ENCODE measurements at regions of chr2 and their contacts with region 1.

Region 1: DNA sequence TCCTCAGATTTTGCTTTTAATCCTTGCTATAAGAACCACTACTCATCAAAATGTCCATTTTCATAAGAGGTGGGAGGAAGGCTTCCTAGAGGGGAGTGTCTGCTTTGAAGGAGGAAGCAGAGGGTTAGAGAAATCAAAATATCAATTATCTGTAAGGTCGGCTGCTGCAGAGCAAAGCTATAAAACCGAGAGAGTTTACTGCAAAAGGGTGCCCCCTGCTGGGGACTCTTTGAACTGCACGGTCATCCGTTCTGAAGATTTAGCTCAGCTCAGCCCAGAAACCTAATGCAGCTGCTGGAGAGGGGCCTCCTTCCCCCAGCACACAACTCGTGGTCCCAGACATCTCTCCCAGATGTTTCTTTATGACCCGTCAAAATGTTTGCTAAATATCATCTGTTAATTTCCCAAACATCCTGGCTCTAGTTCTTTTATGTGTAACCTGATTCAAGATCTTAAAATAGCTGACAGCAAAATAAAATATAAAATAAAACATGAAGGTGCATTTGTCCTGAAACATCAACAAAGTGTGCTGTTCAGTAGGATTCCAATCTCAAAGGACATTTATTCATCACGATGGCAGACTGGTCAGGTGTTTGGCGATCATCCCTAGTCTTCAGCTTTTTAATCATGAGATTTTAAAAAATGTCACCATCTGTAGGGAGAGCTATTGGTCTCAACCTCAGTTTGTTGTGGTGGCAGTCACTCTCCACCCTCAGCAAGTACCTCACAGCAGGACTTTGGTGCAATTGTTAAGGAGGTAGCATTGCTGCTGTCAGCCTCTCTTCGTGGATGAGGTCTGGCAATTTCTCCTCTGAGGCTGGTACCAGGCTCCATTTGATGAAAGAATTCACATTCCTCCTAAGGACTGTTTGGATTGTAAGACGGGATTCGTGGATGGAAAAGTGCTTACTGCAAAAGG is 185.9 kb downstream of the MTX2 start:
- DNase-seq: peak; percentile 94
- ATAC-seq: peak; percentile 83
- H3K4me3 Mint-ChIP-seq: no peak overlapping the region
- H3K27ac Mint-ChIP-seq: no peak overlapping the region
- H3K4me1 Mint-ChIP-seq: peaks cover 2% of the 10 kb centered on the region
- H3K27me3 Mint-ChIP-seq: peaks cover 25% of the 10 kb centered on the region
- CTCF ChIP-seq: peak; percentile 85

Region 2: DNA sequence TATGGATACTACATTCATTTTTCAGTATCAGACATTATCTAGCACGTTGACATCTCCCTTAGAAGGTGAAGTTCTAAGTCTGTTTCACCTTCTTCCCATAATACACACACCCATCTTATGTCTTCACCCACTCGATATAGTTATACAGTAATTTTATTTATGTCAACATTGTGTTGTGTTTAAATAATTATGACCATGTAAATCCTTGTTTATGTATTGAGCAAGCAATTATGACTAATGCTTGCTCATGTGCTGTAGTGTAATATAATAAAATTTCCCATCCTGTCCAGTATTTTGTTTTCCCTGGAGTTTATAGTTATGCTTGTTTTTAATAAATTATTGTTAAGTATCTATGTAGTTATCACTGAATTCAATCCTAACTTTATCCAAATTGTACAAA is 22.7 kb before region 1 on chr2:
- CTCF ChIA-PET with region 1: interaction called, 14 read pairs
- POLR2A ChIA-PET with region 1: no interaction called
- intact Hi-C with region 1: no loop called
- DNase-seq: no peak
- ATAC-seq: no peak
- H3K4me3 Mint-ChIP-seq: no peak overlapping the region
- H3K27ac Mint-ChIP-seq: no peak overlapping the region
- H3K4me1 Mint-ChIP-seq: no peaks in the 10 kb centered on the region
- H3K27me3 Mint-ChIP-seq: peaks cover 18% of the 10 kb centered on the region
- CTCF ChIP-seq: no peak

Region 3: GRCh38 chr2:176638167-176639015 is 183.2 kb after region 1 on chr2:
- CTCF ChIA-PET with region 1: interaction called, 20 read pairs
- POLR2A ChIA-PET with region 1: interaction called, 3 read pairs
- intact Hi-C with region 1: loop called (anchors 10 kb)
- DNase-seq: peak; percentile 71
- ATAC-seq: peak; percentile 87
- H3K4me3 Mint-ChIP-seq: peak overlapping the region; percentile 60
- H3K27ac Mint-ChIP-seq: no peak overlapping the region
- H3K4me1 Mint-ChIP-seq: peaks cover 6% of the 10 kb centered on the region
- H3K27me3 Mint-ChIP-seq: peaks cover 52% of the 10 kb centered on the region
- CTCF ChIP-seq: peak; percentile 85